WTC11 (cell line): ENCODE measurements at regions of chr13 and their contacts with region 1.

Region 1: GRCh38 chr13:91381371-91381770 is 17.1 kb upstream of the GPC5 start:
- DNase-seq: no peak
- ATAC-seq: peak; percentile 34; the same call in 1 of the 2 replicates
- H3K4me3 Mint-ChIP-seq: no peak overlapping the region
- H3K27ac Mint-ChIP-seq: no peak overlapping the region
- H3K4me1 Mint-ChIP-seq: no peaks in the 10 kb centered on the region
- H3K27me3 Mint-ChIP-seq: no peaks in the 10 kb centered on the region
- CTCF ChIP-seq: no peak

Region 2: DNA sequence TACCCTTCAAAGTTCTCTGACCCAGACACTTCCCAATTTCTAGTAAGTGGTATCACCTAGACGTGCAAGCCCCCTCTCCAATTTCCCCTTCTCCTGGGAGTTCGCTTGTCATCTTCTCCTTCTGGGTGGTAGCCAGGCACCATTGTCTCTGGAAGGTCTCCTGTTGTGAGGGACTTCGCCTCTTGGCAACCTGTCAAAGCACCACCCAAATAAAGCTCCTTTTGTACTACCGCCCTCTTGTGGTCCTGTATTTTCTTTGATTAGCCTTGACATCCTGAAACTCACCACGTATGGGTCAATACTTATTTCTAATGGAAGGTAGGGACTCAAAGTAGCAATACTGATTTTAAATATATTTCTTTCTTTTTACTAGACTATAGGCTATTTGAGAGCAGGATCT is 25.2 kb after region 1 on chr13:
- CTCF ChIA-PET with region 1: interaction called, 14 read pairs
- POLR2A ChIA-PET with region 1: no interaction called
- DNase-seq: peak; percentile 53
- ATAC-seq: peak; percentile 93
- H3K4me3 Mint-ChIP-seq: no peak overlapping the region
- H3K27ac Mint-ChIP-seq: no peak overlapping the region
- H3K4me1 Mint-ChIP-seq: peaks cover 3% of the 10 kb centered on the region
- H3K27me3 Mint-ChIP-seq: peaks cover 7% of the 10 kb centered on the region
- CTCF ChIP-seq: peak; percentile 31; the same call in 1 of the 2 replicates

Region 3: DNA sequence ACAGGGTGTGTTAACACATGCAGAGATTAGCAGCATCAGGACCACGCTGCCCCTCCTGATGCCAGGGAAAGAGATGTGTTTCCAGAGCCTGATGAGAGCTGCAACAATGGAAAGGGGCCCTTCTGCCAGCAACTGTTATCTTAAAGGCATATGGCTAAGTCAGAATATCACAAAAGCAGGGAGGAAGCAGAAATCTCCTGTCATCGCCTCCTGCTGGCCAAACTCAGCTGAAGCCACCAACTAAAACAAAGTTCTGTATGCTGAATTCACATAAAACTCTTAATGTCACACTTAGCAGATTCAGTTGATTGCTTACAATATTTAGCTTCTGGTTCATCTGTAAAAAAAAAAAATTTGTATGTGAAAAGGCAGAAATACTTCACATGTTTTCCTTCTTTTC is 195.2 kb after region 1 on chr13:
- CTCF ChIA-PET with region 1: interaction called, 15 read pairs
- POLR2A ChIA-PET with region 1: no interaction called
- DNase-seq: peak; percentile 50
- ATAC-seq: peak; percentile 84
- H3K4me3 Mint-ChIP-seq: no peak overlapping the region
- H3K27ac Mint-ChIP-seq: no peak overlapping the region
- H3K4me1 Mint-ChIP-seq: no peaks in the 10 kb centered on the region
- H3K27me3 Mint-ChIP-seq: no peaks in the 10 kb centered on the region
- CTCF ChIP-seq: peak; percentile 42

Region 4: DNA sequence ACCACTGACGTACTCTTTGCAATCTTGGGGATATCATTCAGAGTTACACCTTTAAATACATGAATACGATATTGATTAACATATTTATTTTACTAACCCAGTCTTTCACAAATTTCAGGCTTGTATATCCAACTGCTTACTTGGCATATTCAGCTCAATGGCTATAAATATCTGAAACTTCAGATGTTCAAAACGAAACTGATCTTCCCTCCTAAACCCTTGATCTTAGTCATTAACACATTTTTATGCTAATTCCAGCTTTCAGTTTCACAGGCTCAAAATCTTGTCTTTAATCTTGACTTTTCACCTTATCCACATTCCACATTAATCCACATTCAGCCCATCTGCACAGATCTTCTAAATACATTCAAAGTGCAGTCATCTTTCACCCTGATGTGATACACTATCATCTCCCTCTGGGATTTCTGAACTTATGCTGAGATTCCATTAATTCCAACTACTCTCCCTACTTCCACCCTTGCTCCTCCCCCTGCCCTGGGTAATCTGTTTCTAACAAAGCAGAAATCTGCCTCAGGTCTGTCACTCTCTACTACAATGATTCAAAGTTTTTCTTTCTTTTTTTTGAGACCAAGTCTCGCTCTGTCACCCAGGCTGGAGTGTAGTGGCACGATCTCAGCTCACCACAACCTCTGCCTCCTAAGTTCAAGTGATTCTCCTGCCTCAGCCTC is 404.2 kb after region 1 on chr13:
- CTCF ChIA-PET with region 1: interaction called, 10 read pairs
- POLR2A ChIA-PET with region 1: no interaction called
- DNase-seq: no peak
- ATAC-seq: no peak
- H3K4me3 Mint-ChIP-seq: no peak overlapping the region
- H3K27ac Mint-ChIP-seq: peak overlapping the region; percentile 29; the same call in 1 of the 2 replicates
- H3K4me1 Mint-ChIP-seq: peaks cover 15% of the 10 kb centered on the region
- H3K27me3 Mint-ChIP-seq: no peaks in the 10 kb centered on the region
- CTCF ChIP-seq: no peak